Activated naive CD4-positive, alpha-beta T cell treated with anti-CD3 and anti-CD28 coated beads for 36 hours (primary cell): ENCODE measurements at regions of chr16 and their contacts with region 1.

Region 1: DNA sequence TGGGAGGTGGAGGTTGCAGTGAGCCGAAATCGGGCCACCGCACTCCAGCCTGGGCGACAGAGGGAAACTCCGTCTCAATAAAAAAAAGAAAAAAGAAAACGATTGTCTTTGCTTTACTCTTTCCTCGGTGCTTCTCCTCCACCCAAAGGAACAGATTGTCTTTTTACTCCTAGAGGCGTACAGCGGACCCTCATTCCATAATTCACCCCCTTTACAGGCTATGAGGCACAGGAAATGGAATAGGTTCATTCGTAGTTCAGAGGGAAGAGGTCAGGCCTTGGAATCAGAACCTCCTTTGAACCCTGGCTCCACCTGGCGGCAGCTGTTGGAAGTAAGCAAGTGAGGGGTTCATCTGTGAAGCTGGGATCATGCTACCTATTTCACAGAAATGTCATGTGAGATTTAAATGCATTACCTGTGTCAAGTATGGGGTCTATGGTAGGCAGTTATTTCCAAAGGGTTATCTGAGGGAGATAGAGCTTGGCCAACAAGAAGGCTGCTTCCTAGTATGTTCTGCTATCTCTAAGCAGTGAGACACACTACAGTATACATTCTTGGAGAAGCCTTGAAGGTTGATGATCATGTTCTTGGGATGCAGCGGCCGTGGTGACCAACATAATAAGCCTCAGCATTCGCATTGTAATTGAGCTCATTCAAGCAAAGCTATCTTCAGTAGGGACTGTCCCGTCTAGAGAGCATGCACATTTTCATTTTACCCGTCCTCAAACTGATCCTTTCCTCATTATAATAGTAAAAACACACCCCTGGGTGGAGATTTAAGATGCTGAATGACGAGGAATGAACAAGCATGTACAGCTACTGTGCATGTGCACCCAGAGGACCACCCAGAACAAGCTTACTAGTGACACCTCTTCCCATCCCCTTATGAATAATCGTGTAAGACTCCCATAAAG is 18.7 kb upstream of the ZNF689 start:
- DNase-seq: peak; percentile 97
- H3K4me3 Mint-ChIP-seq: peak overlapping the region; percentile 55
- H3K27ac Mint-ChIP-seq: peak overlapping the region; percentile 82
- H3K4me1 Mint-ChIP-seq: peaks cover 8% of the 10 kb centered on the region
- H3K27me3 Mint-ChIP-seq: no peaks in the 10 kb centered on the region

Region 2: GRCh38 chr16:30335598-30336474 is 293.0 kb before region 1 on chr16:
- CTCF ChIA-PET with region 1: no interaction called
- intact Hi-C with region 1: no loop called
- DNase-seq: peak; percentile 63
- H3K4me3 Mint-ChIP-seq: peak overlapping the region; percentile 78
- H3K27ac Mint-ChIP-seq: peak overlapping the region; percentile 59
- H3K4me1 Mint-ChIP-seq: peaks cover 26% of the 10 kb centered on the region
- H3K27me3 Mint-ChIP-seq: no peaks in the 10 kb centered on the region

Region 3: DNA sequence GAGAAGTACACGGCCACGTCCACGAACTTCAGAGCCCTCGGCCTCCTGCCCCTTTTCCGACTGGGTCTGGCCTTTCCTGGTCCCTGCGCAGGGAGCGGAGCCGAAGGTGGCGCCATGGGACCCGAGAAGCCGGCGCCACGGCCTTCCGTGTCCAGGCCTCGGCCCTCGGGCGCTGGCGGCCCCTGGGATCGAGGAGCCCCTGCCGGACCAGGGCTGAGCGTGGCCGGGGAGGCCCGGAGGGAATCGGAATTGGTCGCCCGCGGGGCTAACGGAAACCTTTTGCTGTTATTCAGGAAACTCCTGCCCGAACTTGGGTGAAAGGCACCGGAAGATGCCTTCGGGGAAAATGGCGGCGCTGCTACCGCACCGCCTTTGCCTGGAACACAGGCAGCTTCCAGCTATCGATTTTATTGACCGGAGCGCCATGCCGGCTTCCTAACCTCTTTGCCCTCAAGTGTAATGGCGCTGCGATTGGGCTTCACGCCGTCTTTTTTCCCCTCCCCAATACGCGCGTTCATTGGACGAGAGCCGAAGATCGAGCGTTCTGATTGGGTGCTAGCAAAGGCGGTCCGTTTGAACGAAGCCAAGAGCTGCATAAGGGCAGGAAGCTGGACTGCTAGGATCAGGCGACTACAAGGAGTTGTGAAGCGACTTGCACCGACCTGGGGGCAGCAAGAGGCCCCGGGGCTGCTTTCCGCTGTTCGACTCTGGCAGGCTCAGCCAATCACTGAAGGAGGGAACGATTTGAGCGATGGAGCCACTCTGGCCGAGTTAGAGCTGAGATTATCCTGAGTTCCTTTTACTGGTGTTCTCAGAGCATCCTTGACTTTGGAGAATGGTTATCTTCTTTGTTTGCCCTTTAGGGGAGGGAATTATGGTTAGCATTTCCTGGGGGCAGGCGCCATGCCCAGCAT is 18.7 kb before region 1 on chr16 and contains the start of gene ZNF689:
- CTCF ChIA-PET with region 1: interaction called, 51 read pairs
- intact Hi-C with region 1: loop called (anchors 2 kb)
- DNase-seq: peak; percentile 98
- H3K4me3 Mint-ChIP-seq: peak within 1 kb of the TSS; percentile 83
- H3K27ac Mint-ChIP-seq: peak within 1 kb of the TSS; percentile 96
- H3K4me1 Mint-ChIP-seq: peaks cover 20% of the 10 kb centered on the region
- H3K27me3 Mint-ChIP-seq: no peaks in the 10 kb centered on the region
- total RNA-seq, gene ZNF689: 10.7 to 11.5 TPM

Region 4: GRCh38 chr16:30615358-30616091 is 13.4 kb before region 1 on chr16:
- CTCF ChIA-PET with region 1: interaction called, 51 read pairs
- intact Hi-C with region 1: loop called (anchors 2 kb)
- DNase-seq: peak; percentile 91
- H3K4me3 Mint-ChIP-seq: no peak overlapping the region
- H3K27ac Mint-ChIP-seq: no peak overlapping the region
- H3K4me1 Mint-ChIP-seq: peaks cover 3% of the 10 kb centered on the region
- H3K27me3 Mint-ChIP-seq: no peaks in the 10 kb centered on the region

Region 5: DNA sequence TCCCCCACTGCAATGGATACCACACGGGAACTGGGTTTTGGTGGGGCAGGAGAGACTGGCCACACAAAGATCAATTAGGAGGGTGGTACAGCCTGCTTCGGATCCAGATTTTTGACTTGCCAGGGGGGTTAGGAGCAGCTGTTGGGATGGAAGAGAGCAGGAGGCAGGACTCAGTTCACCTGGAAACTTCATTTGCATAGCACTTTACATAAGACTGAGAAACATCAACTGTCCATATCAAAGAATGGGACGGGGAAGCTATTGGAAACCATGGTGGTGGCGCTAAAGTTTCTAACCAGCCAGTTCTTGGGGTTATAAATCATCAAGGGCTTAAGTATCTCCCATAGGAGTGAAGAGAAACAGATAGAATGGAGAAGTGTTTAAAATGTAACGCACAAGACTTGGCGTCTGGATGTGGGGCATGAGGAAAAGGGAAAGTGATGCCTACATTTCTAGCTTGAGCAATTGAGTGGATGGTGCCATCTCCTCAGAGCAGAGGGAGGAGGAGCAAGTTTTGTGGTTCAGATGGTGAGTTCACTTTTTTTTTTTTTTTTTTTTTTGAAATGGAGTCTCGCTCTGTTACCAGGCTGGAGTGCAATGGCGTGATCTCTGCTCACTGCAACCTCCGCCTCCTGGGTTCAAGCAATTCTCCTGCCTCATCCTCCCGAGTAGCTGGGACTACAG is 63.6 kb after region 1 on chr16:
- CTCF ChIA-PET with region 1: interaction called, 14 read pairs
- intact Hi-C with region 1: no loop called
- DNase-seq: no peak
- H3K4me3 Mint-ChIP-seq: no peak overlapping the region
- H3K27ac Mint-ChIP-seq: no peak overlapping the region
- H3K4me1 Mint-ChIP-seq: peaks cover 15% of the 10 kb centered on the region
- H3K27me3 Mint-ChIP-seq: no peaks in the 10 kb centered on the region

Region 6: DNA sequence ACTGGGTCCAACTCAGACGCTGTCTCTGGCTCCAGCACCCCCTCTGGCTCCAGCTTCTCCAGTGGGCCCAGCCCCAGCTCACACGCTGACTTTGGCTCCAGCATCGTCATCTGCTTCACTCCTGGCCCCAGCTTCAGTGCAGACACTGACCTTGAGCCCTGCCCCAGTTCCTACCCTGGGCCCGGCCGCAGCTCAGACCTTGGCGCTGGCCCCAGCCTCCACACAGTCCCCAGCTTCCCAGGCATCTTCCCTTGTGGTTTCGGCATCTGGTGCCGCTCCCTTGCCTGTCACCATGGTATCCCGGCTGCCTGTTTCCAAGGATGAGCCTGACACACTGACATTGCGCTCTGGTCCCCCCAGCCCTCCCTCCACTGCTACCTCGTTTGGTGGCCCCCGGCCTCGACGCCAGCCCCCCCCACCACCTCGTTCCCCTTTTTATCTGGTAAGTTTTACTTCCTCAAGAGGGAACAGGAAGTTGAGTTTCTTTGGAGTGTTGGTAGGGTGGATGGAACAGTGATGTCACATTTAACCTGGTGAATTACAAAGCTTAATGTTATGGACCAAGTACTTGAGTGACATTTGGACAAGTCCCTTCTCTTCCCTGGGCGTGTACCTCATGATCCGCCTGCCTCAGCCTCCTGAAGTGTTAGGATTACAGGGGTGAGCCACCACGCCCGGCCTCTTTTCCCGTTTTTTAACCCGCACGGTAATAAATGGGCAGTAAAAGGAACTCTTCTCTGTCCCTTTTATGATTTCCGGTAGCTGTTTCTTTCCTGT is 95.9 kb after region 1 on chr16:
- CTCF ChIA-PET with region 1: no interaction called
- intact Hi-C with region 1: no loop called
- DNase-seq: no peak
- H3K4me3 Mint-ChIP-seq: no peak overlapping the region
- H3K27ac Mint-ChIP-seq: peak overlapping the region; percentile 29
- H3K4me1 Mint-ChIP-seq: no peaks in the 10 kb centered on the region
- H3K27me3 Mint-ChIP-seq: no peaks in the 10 kb centered on the region